ENCODE measurements at regions of chr19 and their contacts with region 1.

Region 1: DNA sequence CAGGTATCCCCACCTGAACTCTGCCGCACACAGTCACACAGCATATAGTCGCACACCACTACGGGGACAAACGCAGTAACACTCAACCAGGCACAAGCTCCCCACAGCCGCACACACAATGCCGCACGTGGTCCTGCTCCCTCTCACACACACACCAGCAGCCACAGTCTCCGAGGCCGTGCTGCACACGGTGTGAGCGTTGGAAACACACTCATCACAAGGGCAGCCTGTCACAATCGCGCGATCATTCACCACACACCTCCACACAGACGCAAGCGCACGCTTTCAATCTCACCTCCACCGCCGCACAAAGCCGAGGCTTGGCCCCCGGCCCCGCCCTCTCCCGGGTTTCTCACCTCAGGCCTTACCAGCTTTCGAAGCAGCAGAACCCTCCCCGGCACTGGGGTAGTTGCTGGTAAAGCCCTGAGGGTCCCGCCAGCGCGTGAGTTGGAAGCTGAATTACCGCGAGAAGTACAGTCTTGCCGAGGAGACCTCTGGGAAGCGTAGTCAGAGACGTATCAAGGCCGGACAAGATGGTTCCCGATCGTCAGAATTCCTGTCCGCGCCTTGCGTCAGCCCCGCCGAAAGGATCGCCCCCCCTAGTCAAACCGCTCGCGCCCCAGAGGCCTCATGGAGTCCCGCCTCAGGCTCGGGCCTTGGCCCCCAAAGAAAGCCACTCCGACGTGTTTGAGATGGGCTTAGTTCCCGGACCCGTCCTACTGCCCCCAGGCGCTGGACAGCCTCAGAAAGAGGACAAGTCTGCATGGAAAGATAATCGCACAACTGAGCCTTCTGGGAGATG is at the start of gene ZNF566:
- DNase-seq: peak; percentile 94
- H3K4me3 ChIP-seq: peak within 1 kb of the TSS; percentile 67 to 81 (median 72)
- H3K27ac ChIP-seq: peak within 1 kb of the TSS; percentile 91 to 96 (median 94)
- H3K4me1 ChIP-seq: peaks cover 0 to 20% (median 15%) of the 10 kb centered on the region in 4 donors
- H3K27me3 ChIP-seq: no peaks in the 10 kb centered on the region
- CTCF ChIP-seq: no peak
- EP300 ChIP-seq: no peak
- POLR2A ChIP-seq: peak in 1 of 2 donors; percentile 12
- total RNA-seq, gene ZNF566: 15.5 to 21.6 (median 18.4) TPM

Region 2: DNA sequence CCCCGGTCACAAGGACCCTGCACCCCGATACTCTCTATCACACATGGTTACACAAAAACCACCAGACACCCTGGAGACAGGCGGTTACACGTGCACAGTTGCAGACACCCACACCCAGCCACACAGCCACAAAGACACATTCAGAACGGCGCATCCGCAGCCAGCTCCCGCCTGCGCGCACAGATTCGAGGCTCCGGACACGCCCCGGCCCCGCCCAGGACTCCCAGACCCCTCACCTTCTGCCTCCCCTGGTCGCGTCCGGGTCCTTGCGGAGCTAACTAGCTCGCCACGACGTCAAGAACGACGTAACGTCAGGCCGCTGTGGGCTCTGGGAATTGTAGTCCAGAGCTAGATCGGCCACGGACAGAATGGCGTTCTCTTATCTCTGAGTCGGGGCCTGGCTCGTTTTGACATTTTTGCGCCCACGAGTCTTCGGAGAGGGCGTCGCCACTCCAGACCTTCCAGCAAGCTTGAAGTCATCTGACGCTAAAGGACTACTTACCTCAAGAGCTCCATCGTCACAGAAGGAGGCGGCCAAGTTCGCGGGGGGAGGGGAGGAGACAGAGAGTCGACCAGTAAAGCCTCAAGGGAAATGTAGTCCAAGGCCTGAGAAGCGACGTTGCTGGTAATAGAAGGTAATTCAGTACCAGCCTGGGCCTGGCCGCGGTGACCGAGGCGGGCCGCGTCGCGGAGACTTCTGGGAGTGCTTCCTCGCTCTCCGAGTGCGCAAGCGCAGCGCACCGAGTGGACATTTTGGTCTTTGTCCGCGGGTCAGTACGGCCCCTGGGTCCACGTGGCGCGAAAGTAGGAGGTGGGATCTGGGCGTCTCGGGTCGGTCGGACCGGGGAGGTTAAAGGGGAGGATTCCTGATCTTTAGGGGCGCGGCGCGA is 274.7 kb before region 1 on chr19 and contains the starts of genes ZNF146 and ZNF565:
- intact Hi-C with region 1: loop called (anchors 5 kb)
- DNase-seq: peak; percentile 99
- H3K4me3 ChIP-seq: peak within 1 kb of the TSS; percentile 67 to 95 (median 84)
- H3K27ac ChIP-seq: peak within 1 kb of the TSS; percentile 92 to 99 (median 96)
- H3K4me1 ChIP-seq: peaks cover 0 to 33% (median 30%) of the 10 kb centered on the region in 4 donors
- H3K27me3 ChIP-seq: no peaks in the 10 kb centered on the region
- CTCF ChIP-seq: peak in 1 of 4 experiments; percentile 24
- EP300 ChIP-seq: no peak
- POLR2A ChIP-seq: peak; percentile 75 to 78
- total RNA-seq, gene ZNF146: 52.1 to 71.7 (median 57.5) TPM
- total RNA-seq, gene ZNF565: 5.3 to 7.5 (median 6.8) TPM

Region 3: GRCh38 chr19:36363845-36364244 is 125.5 kb before region 1 on chr19:
- intact Hi-C with region 1: no loop called
- DNase-seq: no peak
- H3K4me3 ChIP-seq: no peak overlapping the region
- H3K27ac ChIP-seq: no peak overlapping the region
- H3K4me1 ChIP-seq: no peaks in the 10 kb centered on the region
- H3K27me3 ChIP-seq: no peaks in the 10 kb centered on the region
- CTCF ChIP-seq: no peak
- EP300 ChIP-seq: no peak
- POLR2A ChIP-seq: no peak

Region 4: DNA sequence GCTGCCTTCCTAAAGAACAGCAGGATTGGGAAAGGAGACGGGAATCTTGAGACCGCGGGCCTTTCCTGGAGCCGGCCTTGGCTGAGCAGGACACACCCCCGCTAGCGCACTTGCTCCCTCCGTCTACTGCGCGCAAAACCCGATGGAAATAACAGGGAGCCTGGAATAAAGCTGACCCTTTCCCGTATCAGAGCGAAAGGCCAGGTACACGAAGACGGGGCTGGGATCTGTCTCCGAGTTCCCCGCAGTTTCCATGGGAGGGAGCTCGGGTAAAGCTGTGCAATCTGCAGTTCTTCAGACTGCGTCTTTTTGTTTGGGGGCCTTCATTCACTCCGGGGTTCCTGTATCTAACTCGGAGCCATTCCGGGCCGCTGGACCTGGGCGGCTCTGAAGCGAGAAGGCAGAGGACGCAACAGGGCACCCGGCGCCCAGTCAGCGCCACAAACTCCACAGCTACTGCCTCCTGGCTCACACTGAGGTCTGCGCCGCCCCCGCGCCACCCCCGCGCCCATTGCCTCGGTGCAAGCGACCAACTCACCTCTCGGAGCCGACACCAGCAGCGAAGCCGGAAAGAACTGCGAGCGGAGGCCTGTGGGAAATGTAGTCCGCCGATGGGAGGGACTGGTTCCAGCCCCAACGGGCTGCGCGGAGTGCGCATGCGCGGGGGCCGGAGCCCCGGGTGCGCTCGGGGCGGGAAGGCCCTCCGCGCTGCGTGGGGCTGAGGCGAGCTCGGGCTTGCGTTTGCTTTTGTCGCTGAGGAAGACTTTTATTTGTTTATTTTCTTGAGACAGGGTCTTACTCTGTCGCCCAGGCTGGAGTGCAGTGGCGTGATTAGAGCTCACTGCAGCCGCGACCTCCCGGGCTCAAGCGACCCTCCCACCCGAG is 110.5 kb before region 1 on chr19 and contains the start of gene ZFP14:
- intact Hi-C with region 1: loop called (anchors 2 kb)
- DNase-seq: peak; percentile 95
- H3K4me3 ChIP-seq: peak within 1 kb of the TSS; percentile 70 to 79 (median 74)
- H3K27ac ChIP-seq: peak within 1 kb of the TSS; percentile 85 to 88 (median 86)
- H3K4me1 ChIP-seq: peaks cover 0 to 22% (median 13%) of the 10 kb centered on the region in 4 donors
- H3K27me3 ChIP-seq: no peaks in the 10 kb centered on the region
- CTCF ChIP-seq: no peak
- EP300 ChIP-seq: no peak
- POLR2A ChIP-seq: peak; percentile 72 to 80
- total RNA-seq, gene ZFP14: 3.5 to 13.3 (median 7.6) TPM

Region 5: DNA sequence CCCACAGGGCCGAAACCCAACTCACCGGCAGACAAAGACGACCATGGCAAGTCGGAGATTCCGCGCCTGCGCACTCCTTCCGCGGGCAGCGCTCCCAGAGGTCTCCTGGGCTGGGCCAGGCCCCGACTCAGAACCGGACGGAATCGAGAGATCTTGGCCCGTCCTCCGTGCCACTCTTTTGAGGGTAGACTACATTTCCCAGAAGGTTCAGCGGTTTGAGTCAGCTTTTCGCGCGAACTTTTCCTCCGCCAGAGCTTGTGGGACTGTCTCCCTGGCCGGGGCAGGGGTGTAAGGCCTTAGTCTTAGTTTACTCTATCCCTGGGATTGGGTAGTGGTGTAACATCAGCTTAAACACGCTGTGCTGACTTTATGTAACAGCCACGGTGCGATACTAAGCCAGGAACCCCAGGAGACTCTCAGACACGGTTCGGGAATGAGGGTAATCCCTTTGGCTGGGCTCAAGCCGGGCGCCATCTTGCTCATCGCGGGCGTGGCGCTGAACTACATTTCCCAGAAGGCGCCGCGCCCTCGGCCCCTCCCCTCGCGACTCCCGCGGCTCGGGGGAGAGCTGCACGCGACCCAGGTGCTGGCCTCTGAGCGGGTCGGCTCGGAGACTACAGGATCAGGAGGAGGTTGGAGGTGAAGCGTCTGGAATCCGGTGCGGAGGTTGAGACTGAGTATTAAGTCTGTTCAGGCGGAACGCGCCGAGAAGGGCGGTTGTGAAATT is 39.0 kb after region 1 on chr19 and contains the start of gene ZNF260:
- intact Hi-C with region 1: loop called (anchors 1 kb)
- DNase-seq: peak; percentile 98
- H3K4me3 ChIP-seq: peak within 1 kb of the TSS; percentile 59 to 80 (median 70)
- H3K27ac ChIP-seq: peak within 1 kb of the TSS; percentile 91 to 92 (median 91)
- H3K4me1 ChIP-seq: peaks cover 0 to 21% (median 18%) of the 10 kb centered on the region in 4 donors
- H3K27me3 ChIP-seq: no peaks in the 10 kb centered on the region
- CTCF ChIP-seq: no peak
- EP300 ChIP-seq: peak in 1 of 4 donors; percentile 41
- POLR2A ChIP-seq: peak in 1 of 2 donors; percentile 33
- total RNA-seq, gene ZNF260: 5.7 to 11.9 (median 11.0) TPM